Activated CD8-positive, alpha-beta T cell treated with anti-CD3 and anti-CD28 coated beads for 36 hours (primary cell): ENCODE measurements at regions of chr1 and their contacts with region 1.

Region 1: GRCh38 chr1:42766741-42767509 is at the starts of genes C1orf50 and P3H1:
- DNase-seq: peak; percentile 100
- ATAC-seq: peak; percentile 95
- H3K4me3 Mint-ChIP-seq: no peak within 1 kb of the TSS
- H3K27ac Mint-ChIP-seq: peak within 1 kb of the TSS; percentile 91
- H3K4me1 Mint-ChIP-seq: peaks cover 26% of the 10 kb centered on the region
- H3K27me3 Mint-ChIP-seq: no peaks in the 10 kb centered on the region
- CTCF ChIP-seq: no peak
- total RNA-seq, gene C1orf50: 4.7 to 5.2 TPM
- total RNA-seq, gene P3H1: 34.7 to 34.8 TPM

Region 2: DNA sequence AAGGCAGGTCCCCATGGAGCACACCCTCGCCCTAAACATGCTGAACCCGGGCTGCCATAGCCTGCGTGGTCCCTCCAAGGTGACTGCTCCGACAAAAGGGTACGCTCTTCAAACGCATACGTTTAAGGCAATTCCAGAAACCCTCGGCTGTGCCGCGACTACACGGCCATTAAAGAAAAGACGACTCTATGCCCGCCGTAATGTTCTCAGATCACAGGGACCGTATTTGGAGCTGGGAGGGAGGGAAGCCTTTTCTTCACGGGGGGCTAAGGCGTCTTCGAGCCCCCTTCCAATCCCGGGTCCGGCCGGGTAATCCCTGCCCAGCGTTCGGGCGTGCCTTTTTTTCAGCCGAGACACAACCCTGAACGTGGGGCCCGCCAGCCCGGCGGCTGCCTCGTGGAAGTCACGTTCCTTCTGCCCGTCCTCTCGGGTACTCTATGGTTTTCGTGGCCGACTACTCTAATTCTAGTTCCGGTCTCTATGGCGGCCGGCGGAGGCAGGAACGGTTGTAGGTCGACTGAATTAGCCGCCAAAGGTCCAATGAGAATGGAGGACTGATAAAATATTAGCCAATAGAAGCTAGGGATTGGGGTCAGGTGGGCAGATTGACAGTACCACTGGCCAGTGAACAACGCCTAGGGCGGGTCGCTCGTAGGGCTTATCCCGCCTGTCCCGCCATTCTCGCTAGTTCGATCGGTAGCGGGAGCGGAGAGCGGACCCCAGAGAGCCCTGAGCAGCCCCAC is 85.0 kb before region 1 on chr1 and contains the start of gene YBX1:
- CTCF ChIA-PET with region 1: interaction called, 5 read pairs
- POLR2A ChIA-PET with region 1: interaction called, 21 read pairs
- intact Hi-C with region 1: no loop called
- DNase-seq: peak; percentile 96
- ATAC-seq: peak; percentile 95
- H3K4me3 Mint-ChIP-seq: peak within 1 kb of the TSS; percentile 98
- H3K27ac Mint-ChIP-seq: peak within 1 kb of the TSS; percentile 94
- H3K4me1 Mint-ChIP-seq: peaks cover 40% of the 10 kb centered on the region
- H3K27me3 Mint-ChIP-seq: no peaks in the 10 kb centered on the region
- CTCF ChIP-seq: no peak
- total RNA-seq, gene YBX1: 1,417 to 1,447 TPM

Region 3: DNA sequence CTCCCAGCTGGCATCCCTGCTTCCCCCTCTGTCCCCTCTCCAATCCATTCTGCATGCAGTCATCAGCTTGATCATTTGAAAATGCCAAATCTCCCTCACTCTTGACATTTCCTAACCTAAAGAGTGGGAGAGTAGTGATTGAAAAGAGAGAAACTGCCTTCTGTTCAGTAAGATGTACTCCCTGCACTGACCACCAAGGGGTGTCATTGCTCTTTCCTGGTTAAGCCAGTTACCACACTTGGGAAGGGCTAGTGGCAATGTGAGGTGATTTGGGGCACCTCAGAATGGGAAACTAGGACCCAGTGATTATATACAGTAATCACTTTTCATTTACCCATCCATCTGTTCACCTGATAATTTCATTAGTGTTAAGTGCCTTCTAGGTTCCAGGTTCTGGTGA is 10.9 kb after region 1 on chr1:
- CTCF ChIA-PET with region 1: interaction called, 41 read pairs
- POLR2A ChIA-PET with region 1: interaction called, 8 read pairs
- intact Hi-C with region 1: no loop called
- DNase-seq: peak; percentile 56
- ATAC-seq: peak; percentile 82
- H3K4me3 Mint-ChIP-seq: no peak overlapping the region
- H3K27ac Mint-ChIP-seq: no peak overlapping the region
- H3K4me1 Mint-ChIP-seq: peaks cover 28% of the 10 kb centered on the region
- H3K27me3 Mint-ChIP-seq: no peaks in the 10 kb centered on the region
- CTCF ChIP-seq: peak; percentile 76

Region 4: GRCh38 chr1:42783092-42783491 is 16.2 kb after region 1 on chr1:
- CTCF ChIA-PET with region 1: interaction called, 41 read pairs
- POLR2A ChIA-PET with region 1: interaction called, 8 read pairs
- intact Hi-C with region 1: no loop called
- DNase-seq: no peak
- ATAC-seq: no peak
- H3K4me3 Mint-ChIP-seq: no peak overlapping the region
- H3K27ac Mint-ChIP-seq: no peak overlapping the region
- H3K4me1 Mint-ChIP-seq: peaks cover 23% of the 10 kb centered on the region
- H3K27me3 Mint-ChIP-seq: no peaks in the 10 kb centered on the region
- CTCF ChIP-seq: no peak

Region 5: GRCh38 chr1:42816585-42817434 is 49.9 kb after region 1 on chr1 and contains the starts of genes ERMAP and SVBP:
- CTCF ChIA-PET with region 1: interaction called, 3 read pairs
- POLR2A ChIA-PET with region 1: interaction called, 11 read pairs
- intact Hi-C with region 1: no loop called
- DNase-seq: peak; percentile 93
- ATAC-seq: peak; percentile 91
- H3K4me3 Mint-ChIP-seq: peak within 1 kb of the TSS; percentile 71
- H3K27ac Mint-ChIP-seq: peak within 1 kb of the TSS; percentile 90
- H3K4me1 Mint-ChIP-seq: peaks cover 23% of the 10 kb centered on the region
- H3K27me3 Mint-ChIP-seq: no peaks in the 10 kb centered on the region
- CTCF ChIP-seq: no peak
- total RNA-seq, gene ERMAP: 3.9 to 4.4 TPM
- total RNA-seq, gene SVBP: 12.2 to 14.3 TPM

Region 6: DNA sequence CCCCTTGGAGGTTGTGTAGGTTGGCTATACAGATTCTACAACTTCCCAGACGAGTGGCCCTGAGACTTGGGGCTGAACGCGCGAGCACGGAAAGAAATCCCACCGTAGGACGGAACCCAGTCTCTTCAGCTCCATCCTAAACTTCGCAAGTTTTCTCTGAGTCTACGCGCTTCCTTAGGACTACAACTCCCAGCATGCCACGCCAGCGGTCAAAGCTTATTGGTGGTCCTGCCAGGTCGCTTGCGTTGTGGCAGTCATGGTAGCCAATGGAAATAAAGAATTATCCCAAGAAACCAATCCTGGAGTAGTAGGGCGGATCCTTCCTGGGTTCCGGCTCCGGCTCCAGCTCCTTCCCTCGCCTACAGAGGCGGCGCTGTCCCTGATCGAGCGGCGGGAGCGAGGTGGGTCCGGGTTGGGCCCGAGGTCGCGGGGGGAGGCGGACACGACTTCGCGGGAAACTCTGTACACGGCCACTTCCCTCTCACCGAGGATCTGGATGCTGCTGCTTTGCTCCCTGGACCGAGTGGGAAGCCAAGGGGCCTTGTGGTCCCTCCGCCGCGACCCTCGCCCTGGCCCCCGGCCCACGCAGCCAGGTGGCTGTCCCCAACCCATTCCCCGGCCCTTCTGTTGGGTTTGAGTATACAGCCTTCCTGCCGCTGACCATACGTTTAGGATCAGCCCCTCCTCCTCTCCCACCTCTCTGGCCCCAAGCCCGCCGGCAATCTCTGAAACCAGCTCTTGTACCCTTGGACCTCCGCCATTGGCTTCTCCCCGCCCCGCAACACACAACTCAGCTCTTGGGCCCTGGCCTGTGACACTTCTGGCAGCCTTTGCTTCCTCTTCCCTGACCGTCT is 79.6 kb after region 1 on chr1 and contains the start of gene ZNF691:
- CTCF ChIA-PET with region 1: interaction called, 10 read pairs
- POLR2A ChIA-PET with region 1: interaction called, 8 read pairs
- intact Hi-C with region 1: no loop called
- DNase-seq: peak; percentile 95
- ATAC-seq: peak; percentile 96
- H3K4me3 Mint-ChIP-seq: peak within 1 kb of the TSS; percentile 92
- H3K27ac Mint-ChIP-seq: peak within 1 kb of the TSS; percentile 84
- H3K4me1 Mint-ChIP-seq: peaks cover 28% of the 10 kb centered on the region
- H3K27me3 Mint-ChIP-seq: no peaks in the 10 kb centered on the region
- CTCF ChIP-seq: peak; percentile 25
- total RNA-seq, gene ZNF691: 6.9 to 7.5 TPM